ENCODE measurements at regions of chr4 and their contacts with region 1.

Region 1: GRCh38 chr4:108972613-108973283 is 209.9 kb upstream of the ETNPPL start:
- DNase-seq: peak; percentile 11
- H3K4me3 Mint-ChIP-seq: no peak overlapping the region
- H3K27ac Mint-ChIP-seq: peak overlapping the region; percentile 76
- H3K4me1 Mint-ChIP-seq: peaks cover 23% of the 10 kb centered on the region
- H3K27me3 Mint-ChIP-seq: no peaks in the 10 kb centered on the region

Region 2: GRCh38 chr4:108425988-108426387 is 546.8 kb before region 1 on chr4:
- CTCF ChIA-PET with region 1: no interaction called
- intact Hi-C with region 1: loop called (anchors 2 kb)
- DNase-seq: no peak
- H3K4me3 Mint-ChIP-seq: no peak overlapping the region
- H3K27ac Mint-ChIP-seq: peak overlapping the region; percentile 48
- H3K4me1 Mint-ChIP-seq: peaks cover 21% of the 10 kb centered on the region
- H3K27me3 Mint-ChIP-seq: no peaks in the 10 kb centered on the region

Region 3: DNA sequence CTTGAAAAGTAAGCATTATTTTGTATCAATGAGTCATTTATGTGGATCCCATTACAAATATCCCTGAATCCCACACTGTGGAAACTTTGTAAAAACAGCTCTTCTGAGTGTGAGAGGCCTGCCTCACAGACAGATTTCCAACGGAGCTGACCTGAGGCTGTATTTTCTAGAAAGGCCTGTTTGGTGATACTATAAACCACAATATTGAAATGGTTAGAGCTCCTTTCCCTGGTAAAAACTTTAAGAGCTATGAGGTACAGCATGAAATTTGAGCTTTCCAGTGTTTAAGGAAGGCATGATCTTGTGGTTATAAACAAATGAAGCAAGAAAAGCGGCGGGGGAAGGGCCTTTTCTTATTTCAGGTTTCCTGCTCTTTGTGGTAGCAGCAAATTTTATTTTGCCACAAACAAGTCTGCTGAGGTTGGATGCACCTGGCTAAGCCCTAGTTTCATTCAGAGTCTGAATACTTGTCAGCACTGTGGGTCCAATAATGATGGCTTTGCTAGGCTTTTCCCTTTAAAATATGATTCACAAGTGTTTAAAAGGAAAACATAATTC is 123.1 kb before region 1 on chr4:
- CTCF ChIA-PET with region 1: no interaction called
- intact Hi-C with region 1: loop called (anchors 5 kb)
- DNase-seq: peak; percentile 56
- H3K4me3 Mint-ChIP-seq: no peak overlapping the region
- H3K27ac Mint-ChIP-seq: no peak overlapping the region
- H3K4me1 Mint-ChIP-seq: peaks cover 25% of the 10 kb centered on the region
- H3K27me3 Mint-ChIP-seq: no peaks in the 10 kb centered on the region

Region 4: DNA sequence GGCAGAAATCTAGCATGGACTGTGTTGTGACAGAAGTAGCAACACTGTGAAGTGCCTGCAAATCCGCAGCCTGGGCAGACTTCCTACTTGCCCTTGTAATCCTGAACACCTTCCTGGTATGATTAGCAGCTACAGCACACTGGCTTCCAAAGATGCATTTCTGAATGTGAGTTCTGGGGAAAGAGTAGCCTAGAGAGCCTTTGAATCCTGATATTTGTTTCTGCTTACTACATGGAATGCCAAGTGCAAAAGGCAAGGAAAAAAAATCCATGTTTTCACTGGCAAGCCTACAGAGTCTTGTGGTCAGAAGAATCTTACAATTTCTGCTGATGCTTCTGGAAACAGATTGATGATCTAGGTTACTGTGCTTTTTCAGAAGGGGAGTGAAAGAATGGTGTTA is 106.0 kb after region 1 on chr4:
- CTCF ChIA-PET with region 1: no interaction called
- intact Hi-C with region 1: loop called (anchors 1 kb)
- DNase-seq: no peak
- H3K4me3 Mint-ChIP-seq: no peak overlapping the region
- H3K27ac Mint-ChIP-seq: no peak overlapping the region
- H3K4me1 Mint-ChIP-seq: peaks cover 13% of the 10 kb centered on the region
- H3K27me3 Mint-ChIP-seq: no peaks in the 10 kb centered on the region

Region 5: DNA sequence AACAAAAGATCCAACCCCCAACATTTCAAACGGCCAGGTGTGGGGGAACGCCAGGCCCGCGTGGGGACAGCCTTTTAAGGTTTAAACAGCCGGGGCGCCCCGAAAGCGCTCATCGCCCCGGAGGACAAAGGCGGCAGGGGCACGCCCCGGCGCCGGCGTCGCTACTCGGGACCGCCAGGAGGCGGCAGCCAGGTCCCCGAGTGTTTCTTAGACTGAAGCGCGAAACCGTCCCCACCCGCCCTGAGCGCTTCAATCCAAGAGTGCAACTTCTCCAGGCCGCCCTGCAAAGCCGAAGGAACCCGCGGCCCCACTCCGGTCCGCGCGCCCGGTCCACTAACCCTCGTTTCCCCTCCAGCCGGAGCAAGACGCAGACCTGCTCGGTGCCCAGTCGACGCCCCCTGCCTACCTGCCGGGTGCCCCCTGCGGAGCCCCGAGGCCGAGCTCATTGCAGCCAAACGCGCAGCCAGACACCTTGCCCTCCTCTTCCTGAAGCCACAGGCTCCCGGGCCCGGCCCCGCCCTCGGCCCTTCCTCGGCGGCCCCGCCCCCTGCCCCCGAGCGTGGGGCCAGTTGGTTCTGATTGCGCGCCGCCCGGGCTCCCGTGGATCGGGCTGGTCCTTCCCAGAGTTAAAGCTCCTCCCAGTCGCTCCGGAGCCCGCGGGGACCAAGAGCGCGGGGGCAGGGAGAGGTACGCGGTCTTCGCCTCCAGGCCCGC is 730.4 kb after region 1 on chr4 and contains the start of gene CASP6:
- CTCF ChIA-PET with region 1: no interaction called
- intact Hi-C with region 1: loop called (anchors 1 kb)
- DNase-seq: peak; percentile 76
- H3K4me3 Mint-ChIP-seq: peak within 1 kb of the TSS; percentile 86
- H3K27ac Mint-ChIP-seq: peak within 1 kb of the TSS; percentile 82
- H3K4me1 Mint-ChIP-seq: peaks cover 28% of the 10 kb centered on the region
- H3K27me3 Mint-ChIP-seq: no peaks in the 10 kb centered on the region
- total RNA-seq, gene CASP6: 11.5 to 12.1 TPM

Region 6: DNA sequence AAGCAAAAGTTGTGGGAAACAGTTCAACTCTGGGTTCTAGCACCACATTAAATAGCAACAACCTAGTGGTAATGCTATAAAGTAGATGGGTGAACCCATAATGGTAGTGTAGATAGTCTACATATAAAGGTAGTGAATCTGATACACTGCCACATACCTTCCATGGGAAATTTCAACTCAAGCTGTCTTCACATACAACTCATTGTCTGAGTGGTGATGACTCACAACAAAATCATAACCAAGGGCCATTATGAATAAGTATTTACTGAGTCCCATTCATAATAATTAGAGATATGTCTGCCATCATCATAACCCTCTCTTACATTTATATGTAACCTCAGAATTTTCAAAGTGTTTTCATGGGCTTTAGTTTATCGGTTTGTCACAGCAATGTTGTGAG is 974.7 kb after region 1 on chr4:
- CTCF ChIA-PET with region 1: no interaction called
- intact Hi-C with region 1: loop called (anchors 5 kb)
- DNase-seq: no peak
- H3K4me3 Mint-ChIP-seq: no peak overlapping the region
- H3K27ac Mint-ChIP-seq: peak overlapping the region; percentile 65
- H3K4me1 Mint-ChIP-seq: peaks cover 27% of the 10 kb centered on the region
- H3K27me3 Mint-ChIP-seq: no peaks in the 10 kb centered on the region